CD8-positive, alpha-beta T cell (primary cell): ENCODE measurements at regions of chr4 and their contacts with region 1.

Region 1: DNA sequence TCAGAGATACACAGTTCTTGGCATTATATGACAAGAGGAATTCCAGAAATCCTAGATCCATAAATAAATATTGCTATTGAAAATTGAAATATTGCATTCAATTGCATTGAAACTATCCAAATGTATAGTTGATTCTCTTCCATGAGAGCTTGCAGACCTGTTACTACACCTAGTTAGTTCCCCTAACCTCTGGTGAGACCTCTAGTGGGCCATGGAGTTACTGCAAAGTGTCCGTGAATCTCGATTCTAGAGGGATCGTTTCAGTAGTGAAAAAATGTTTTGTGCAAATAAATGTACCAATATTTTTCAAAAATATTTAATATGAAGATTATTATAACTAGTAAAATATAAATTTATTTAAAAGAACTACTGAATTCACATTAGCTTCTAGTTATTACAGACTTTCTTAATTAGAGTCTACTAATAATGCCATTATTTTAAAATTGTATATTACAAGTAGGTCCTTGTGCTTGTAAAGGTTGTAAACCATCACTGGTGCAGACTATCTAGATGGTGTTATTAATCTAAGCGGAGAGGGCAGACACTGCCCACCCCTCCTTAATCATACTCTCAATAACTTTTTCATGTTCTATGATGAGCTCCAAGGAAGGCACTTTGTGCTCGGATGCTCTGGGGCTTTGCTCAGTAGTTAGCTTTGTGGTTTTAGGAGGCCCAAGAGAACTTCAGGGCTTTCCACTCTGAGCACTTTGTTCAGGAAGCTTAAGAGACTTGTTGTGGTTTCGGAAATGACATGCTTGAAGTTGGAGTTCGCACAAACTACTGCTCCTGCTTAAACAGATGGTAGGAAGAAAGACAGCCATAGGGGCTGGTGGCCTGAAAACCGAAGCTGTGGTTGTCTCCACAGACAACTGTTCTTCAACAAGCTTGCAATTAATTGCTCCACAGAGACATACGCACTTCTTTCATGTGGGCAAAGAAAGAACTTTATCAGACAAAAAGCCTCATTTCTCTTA is 42.8 kb downstream of the IL21 start:
- DNase-seq: peak; percentile 32 to 89 (median 57)
- ATAC-seq: peak; percentile 83
- H3K4me3 ChIP-seq: no peak overlapping the region
- H3K4me3 Mint-ChIP-seq: peak overlapping the region; percentile 69
- H3K27ac ChIP-seq: peak overlapping the region; percentile 26 to 47
- H3K27ac Mint-ChIP-seq: peak overlapping the region; percentile 92
- H3K4me1 ChIP-seq: peaks cover 12% of the 10 kb centered on the region
- H3K4me1 Mint-ChIP-seq: peaks cover 27% of the 10 kb centered on the region
- H3K27me3 ChIP-seq: no peaks in the 10 kb centered on the region
- H3K27me3 Mint-ChIP-seq: peaks cover 2% of the 10 kb centered on the region
- CTCF ChIP-seq: peak; percentile 83

Region 2: DNA sequence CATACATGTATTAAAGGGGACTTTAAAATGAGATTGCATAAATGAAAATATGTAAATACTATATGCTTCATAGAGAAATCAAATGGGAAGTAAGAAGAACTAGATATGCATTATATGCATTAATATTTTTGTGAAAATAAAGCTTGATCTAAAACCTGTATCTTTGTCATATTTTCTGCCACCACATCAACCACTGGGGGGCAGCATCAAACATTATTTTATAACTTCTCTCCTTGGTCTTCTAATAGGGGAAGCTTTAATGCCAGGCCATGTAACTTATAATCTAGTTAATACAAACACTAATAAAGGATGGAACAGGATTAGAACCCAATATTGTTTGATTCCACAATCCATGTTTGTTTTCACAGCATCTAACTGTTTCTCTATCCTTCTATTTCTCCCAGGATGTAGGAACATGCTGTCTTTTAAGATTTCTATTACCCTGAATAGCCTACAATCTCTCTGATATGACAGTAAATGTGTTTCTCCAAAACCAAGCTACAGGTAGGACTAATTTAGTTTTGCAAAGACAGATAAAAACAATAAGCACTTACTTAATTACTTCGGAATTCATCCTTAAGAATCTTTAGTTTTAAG is 1207.3 kb before region 1 on chr4:
- CTCF ChIA-PET with region 1: no interaction called
- POLR2A ChIA-PET with region 1: no interaction called
- intact Hi-C with region 1: loop called in 1 of 2 experiments (anchors 5 kb)
- DNase-seq: peak in 4 of 9 experiments; percentile 23 to 43 (median 30)
- ATAC-seq: no peak
- H3K4me3 ChIP-seq: no peak overlapping the region
- H3K4me3 Mint-ChIP-seq: no peak overlapping the region
- H3K27ac ChIP-seq: no peak overlapping the region
- H3K27ac Mint-ChIP-seq: no peak overlapping the region
- H3K4me1 ChIP-seq: no peaks in the 10 kb centered on the region
- H3K4me1 Mint-ChIP-seq: no peaks in the 10 kb centered on the region
- H3K27me3 ChIP-seq: no peaks in the 10 kb centered on the region
- H3K27me3 Mint-ChIP-seq: peaks cover 9% of the 10 kb centered on the region
- CTCF ChIP-seq: peak; percentile 44

Region 3: DNA sequence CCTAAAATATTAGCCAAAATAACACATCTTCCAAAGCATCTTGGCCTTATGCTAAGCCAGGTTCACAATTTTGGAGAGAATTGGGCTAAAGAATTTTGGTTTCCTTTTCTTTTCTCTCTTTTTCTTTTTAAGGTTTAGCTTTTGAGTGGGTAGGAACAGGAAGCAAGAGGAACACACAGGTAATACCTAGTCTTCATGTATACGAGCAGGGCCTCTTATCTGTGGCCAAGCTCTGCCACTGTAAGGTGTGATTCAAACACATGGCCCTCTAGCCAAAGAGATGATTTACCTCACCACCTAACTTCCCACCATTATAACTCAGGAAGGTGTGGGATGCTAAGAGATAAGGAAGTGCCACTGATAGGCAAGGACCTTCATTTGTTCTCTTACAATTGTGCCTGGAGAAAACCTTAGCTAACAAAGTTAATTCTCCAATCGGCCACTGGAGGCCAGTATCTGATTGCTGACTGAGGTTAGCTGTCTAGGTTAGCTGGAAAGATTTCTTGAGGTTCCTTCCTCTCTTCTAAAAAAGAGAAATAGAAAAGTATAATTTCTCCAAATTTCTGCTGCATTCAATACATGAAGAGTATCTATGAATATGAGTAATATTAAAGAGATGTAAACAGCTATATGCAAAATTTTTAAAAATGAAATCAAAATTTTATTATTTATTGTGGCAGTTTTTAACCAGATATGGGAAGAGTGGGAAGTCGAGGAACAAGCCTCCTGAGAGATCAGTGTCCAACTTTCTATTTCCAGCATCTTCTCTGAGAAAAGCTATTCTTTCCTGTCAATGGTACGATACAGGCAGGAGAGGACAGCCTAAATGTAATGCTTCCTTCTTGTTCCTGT is 677.7 kb before region 1 on chr4:
- CTCF ChIA-PET with region 1: interaction called, 14 read pairs
- POLR2A ChIA-PET with region 1: no interaction called
- intact Hi-C with region 1: loop called (anchors 2 kb)
- DNase-seq: peak in 8 of 9 experiments; percentile 9 to 77 (median 50)
- ATAC-seq: peak; percentile 80
- H3K4me3 ChIP-seq: no peak overlapping the region
- H3K4me3 Mint-ChIP-seq: no peak overlapping the region
- H3K27ac ChIP-seq: no peak overlapping the region
- H3K27ac Mint-ChIP-seq: no peak overlapping the region
- H3K4me1 ChIP-seq: peaks cover 4% of the 10 kb centered on the region
- H3K4me1 Mint-ChIP-seq: peaks cover 10% of the 10 kb centered on the region
- H3K27me3 ChIP-seq: no peaks in the 10 kb centered on the region
- H3K27me3 Mint-ChIP-seq: peaks cover 10% of the 10 kb centered on the region
- CTCF ChIP-seq: peak; percentile 72

Region 4: DNA sequence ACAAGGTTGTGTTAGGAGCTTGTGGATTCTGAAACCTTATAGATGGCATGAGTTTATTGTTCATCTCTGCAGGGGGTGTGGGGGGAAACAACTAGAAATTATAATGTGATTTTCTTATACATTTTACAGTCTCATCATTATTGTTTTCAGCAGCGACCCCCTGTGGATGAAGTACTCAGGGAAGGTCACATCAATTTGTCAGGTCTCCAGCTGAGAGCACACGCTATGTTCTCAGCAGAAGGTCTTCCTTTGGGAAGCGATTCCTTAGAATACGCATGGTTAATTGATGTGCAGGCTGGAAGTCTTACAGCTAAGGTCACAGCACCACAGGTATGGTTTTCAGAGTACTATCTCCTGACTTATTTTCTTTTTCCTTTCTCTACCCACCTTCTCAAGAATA is 353.7 kb before region 1 on chr4:
- CTCF ChIA-PET with region 1: no interaction called
- POLR2A ChIA-PET with region 1: no interaction called
- intact Hi-C with region 1: loop called in 1 of 2 experiments (anchors 10 kb)
- DNase-seq: peak in 4 of 9 experiments; percentile 7 to 35 (median 12)
- ATAC-seq: no peak
- H3K4me3 ChIP-seq: no peak overlapping the region
- H3K4me3 Mint-ChIP-seq: no peak overlapping the region
- H3K27ac ChIP-seq: no peak overlapping the region
- H3K27ac Mint-ChIP-seq: no peak overlapping the region
- H3K4me1 ChIP-seq: no peaks in the 10 kb centered on the region
- H3K4me1 Mint-ChIP-seq: peaks cover 8% of the 10 kb centered on the region
- H3K27me3 ChIP-seq: no peaks in the 10 kb centered on the region
- H3K27me3 Mint-ChIP-seq: no peaks in the 10 kb centered on the region
- CTCF ChIP-seq: no peak

Region 5: DNA sequence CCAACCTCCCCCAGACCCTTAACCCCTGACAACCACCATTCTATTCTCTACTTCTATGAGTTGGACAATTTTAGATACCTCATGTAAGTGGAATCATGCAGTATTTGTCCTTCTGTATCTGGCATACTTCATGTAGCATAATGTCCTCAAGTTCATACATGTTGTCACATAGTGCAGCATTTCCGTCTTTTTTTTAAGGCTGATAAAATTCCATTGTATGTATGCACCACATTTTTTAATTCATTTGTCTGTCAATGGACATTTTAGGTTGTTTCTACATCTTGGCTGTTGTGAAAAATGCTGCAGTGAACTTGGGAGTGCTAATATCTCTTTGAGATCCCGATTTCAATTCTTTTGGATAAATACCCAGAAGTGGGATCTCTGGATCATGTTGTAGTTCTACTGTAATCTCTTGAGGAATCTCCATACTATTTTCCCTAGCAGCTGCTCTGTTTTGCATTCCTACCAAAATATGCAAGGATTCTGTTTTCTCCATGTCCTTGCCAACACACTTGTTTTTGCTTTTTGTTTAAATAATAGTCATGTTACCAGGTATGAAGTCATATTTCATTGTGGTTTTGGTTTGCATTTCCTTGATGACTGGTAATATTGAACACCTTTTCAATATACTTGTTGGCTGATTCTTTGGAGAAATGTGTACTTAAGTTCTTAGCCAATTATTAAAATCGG is 248.1 kb before region 1 on chr4:
- CTCF ChIA-PET with region 1: no interaction called
- POLR2A ChIA-PET with region 1: no interaction called
- intact Hi-C with region 1: loop called in 1 of 2 experiments (anchors 5 kb)
- DNase-seq: no peak
- ATAC-seq: no peak
- H3K4me3 ChIP-seq: no peak overlapping the region
- H3K4me3 Mint-ChIP-seq: no peak overlapping the region
- H3K27ac ChIP-seq: no peak overlapping the region
- H3K27ac Mint-ChIP-seq: no peak overlapping the region
- H3K4me1 ChIP-seq: no peaks in the 10 kb centered on the region
- H3K4me1 Mint-ChIP-seq: no peaks in the 10 kb centered on the region
- H3K27me3 ChIP-seq: no peaks in the 10 kb centered on the region
- H3K27me3 Mint-ChIP-seq: no peaks in the 10 kb centered on the region
- CTCF ChIP-seq: no peak

Region 6: DNA sequence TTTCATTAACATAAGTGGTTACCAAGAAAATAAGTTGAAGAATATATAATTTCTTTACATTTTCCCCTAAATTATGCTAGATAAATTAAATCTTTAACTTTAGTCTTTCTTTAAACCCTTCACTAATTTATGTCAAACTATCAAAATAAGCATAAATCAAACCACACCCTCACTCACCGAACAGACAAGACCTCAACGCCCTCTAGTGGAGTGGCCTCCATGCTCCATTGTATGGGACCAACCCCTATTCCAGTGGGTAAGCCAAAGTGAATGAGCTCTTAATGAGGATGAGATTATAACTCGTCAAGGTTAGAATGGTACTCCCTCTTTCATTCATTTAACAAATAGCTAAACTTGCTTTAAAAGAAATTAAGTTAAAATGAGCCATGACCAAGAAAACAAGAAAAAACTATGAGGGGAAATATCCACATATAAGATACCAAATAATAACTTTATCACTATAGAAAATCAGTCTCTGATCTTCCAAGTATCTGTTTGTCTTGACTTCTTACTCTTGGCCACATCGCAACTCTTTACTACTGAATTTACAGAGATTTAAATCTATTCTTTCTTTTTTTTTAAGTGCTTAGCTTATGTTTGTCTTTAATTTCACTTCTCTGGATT is 138.8 kb after region 1 on chr4:
- CTCF ChIA-PET with region 1: no interaction called
- POLR2A ChIA-PET with region 1: no interaction called
- intact Hi-C with region 1: loop called in 1 of 2 experiments (anchors 5 kb)
- DNase-seq: peak; percentile 26 to 77 (median 67)
- ATAC-seq: peak; percentile 91
- H3K4me3 ChIP-seq: no peak overlapping the region
- H3K4me3 Mint-ChIP-seq: no peak overlapping the region
- H3K27ac ChIP-seq: no peak overlapping the region
- H3K27ac Mint-ChIP-seq: no peak overlapping the region
- H3K4me1 ChIP-seq: no peaks in the 10 kb centered on the region
- H3K4me1 Mint-ChIP-seq: peaks cover 3% of the 10 kb centered on the region
- H3K27me3 ChIP-seq: no peaks in the 10 kb centered on the region
- H3K27me3 Mint-ChIP-seq: peaks cover 6% of the 10 kb centered on the region
- CTCF ChIP-seq: peak; percentile 85